ENCODE measurements at regions of chr2 and their contacts with region 1.

Region 1: GRCh38 chr2:46776687-46777327 is 138.8 kb downstream of the MCFD2 start:
- DNase-seq: no peak
- H3K4me3 ChIP-seq: no peak overlapping the region
- H3K27ac ChIP-seq: no peak overlapping the region
- H3K4me1 ChIP-seq: peaks cover 27 to 48% (median 39%) of the 10 kb centered on the region in 4 donors
- H3K27me3 ChIP-seq: no peaks in the 10 kb centered on the region
- CTCF ChIP-seq: peak; percentile 60 to 76 (median 64)
- EP300 ChIP-seq: no peak
- POLR2A ChIP-seq: no peak

Region 2: GRCh38 chr2:46230115-46230571 is 546.7 kb before region 1 on chr2:
- intact Hi-C with region 1: no loop called
- DNase-seq: no peak
- H3K4me3 ChIP-seq: no peak overlapping the region
- H3K27ac ChIP-seq: no peak overlapping the region
- H3K4me1 ChIP-seq: peaks cover 0 to 14% (median 9%) of the 10 kb centered on the region in 4 donors
- H3K27me3 ChIP-seq: no peaks in the 10 kb centered on the region
- CTCF ChIP-seq: peak in 1 of 3 experiments; percentile 3
- EP300 ChIP-seq: no peak
- POLR2A ChIP-seq: no peak

Region 3: DNA sequence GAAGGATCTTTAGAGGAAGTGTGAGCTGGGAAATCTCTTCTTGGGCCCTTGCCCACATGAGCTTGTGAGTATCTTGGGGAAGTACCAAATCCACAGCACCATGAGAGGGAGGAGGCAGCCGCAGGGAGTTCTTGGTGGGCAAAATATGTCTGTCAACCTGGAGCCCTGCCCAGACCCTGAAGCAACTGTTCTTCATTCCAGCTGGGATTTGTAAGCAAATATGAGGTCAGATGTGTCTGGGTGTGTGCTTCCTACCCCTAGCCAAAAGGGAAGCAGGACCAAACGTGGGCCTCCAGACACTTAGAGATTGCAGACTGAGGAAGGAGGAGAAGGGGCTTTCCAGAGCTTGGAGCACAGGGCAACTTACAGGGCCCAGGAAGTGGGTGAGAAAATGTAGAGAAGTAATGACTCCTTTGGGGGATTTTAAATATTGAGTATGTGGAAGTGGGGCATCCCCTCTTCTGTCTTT is 255.6 kb before region 1 on chr2:
- intact Hi-C with region 1: no loop called
- DNase-seq: peak; percentile 93
- H3K4me3 ChIP-seq: no peak overlapping the region
- H3K27ac ChIP-seq: peak overlapping the region; percentile 45 to 55 (median 50)
- H3K4me1 ChIP-seq: peaks cover 8 to 23% (median 14%) of the 10 kb centered on the region in 4 donors
- H3K27me3 ChIP-seq: no peaks in the 10 kb centered on the region
- CTCF ChIP-seq: no peak
- EP300 ChIP-seq: no peak
- POLR2A ChIP-seq: no peak

Region 4: GRCh38 chr2:46650556-46651001 is 126.2 kb before region 1 on chr2:
- intact Hi-C with region 1: loop called (anchors 5 kb)
- DNase-seq: no peak
- H3K4me3 ChIP-seq: no peak overlapping the region
- H3K27ac ChIP-seq: no peak overlapping the region
- H3K4me1 ChIP-seq: peaks cover 5 to 25% (median 12%) of the 10 kb centered on the region in 4 donors
- H3K27me3 ChIP-seq: no peaks in the 10 kb centered on the region
- CTCF ChIP-seq: peak; percentile 90 to 99 (median 94)
- EP300 ChIP-seq: no peak
- POLR2A ChIP-seq: no peak

Region 5: DNA sequence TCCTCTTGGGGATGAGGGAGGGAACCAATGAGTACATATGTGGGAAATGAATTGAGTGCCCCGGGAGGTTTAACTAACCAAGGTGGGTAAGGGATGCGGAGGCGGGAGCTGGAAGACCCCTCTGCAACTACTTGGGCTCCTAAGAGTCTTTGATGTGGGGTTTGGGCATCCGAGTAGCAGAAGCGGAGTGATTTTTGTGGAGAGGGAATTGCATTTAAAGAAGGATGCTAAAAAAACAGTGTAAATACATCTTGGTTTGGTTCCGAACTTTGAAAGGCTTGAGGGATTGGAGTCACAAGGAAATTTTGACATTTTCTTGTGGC is 76.9 kb before region 1 on chr2:
- intact Hi-C with region 1: loop called (anchors 5 kb)
- DNase-seq: no peak
- H3K4me3 ChIP-seq: peak overlapping the region; percentile 80 to 98 (median 90)
- H3K27ac ChIP-seq: peak overlapping the region; percentile 96 to 99 (median 97)
- H3K4me1 ChIP-seq: peaks cover 31 to 56% (median 48%) of the 10 kb centered on the region in 4 donors
- H3K27me3 ChIP-seq: no peaks in the 10 kb centered on the region
- CTCF ChIP-seq: no peak
- EP300 ChIP-seq: no peak
- POLR2A ChIP-seq: no peak

Region 6: GRCh38 chr2:46812361-46813024 is 35.7 kb after region 1 on chr2:
- intact Hi-C with region 1: loop called (anchors 5 kb)
- DNase-seq: peak; percentile 93
- H3K4me3 ChIP-seq: peak overlapping the region in 3 of 4 donors; percentile 14 to 27 (median 21)
- H3K27ac ChIP-seq: peak overlapping the region; percentile 80 to 89 (median 82)
- H3K4me1 ChIP-seq: peaks cover 58 to 66% (median 66%) of the 10 kb centered on the region in 4 donors
- H3K27me3 ChIP-seq: no peaks in the 10 kb centered on the region
- CTCF ChIP-seq: no peak
- EP300 ChIP-seq: peak; percentile 1
- POLR2A ChIP-seq: no peak

Region 7: DNA sequence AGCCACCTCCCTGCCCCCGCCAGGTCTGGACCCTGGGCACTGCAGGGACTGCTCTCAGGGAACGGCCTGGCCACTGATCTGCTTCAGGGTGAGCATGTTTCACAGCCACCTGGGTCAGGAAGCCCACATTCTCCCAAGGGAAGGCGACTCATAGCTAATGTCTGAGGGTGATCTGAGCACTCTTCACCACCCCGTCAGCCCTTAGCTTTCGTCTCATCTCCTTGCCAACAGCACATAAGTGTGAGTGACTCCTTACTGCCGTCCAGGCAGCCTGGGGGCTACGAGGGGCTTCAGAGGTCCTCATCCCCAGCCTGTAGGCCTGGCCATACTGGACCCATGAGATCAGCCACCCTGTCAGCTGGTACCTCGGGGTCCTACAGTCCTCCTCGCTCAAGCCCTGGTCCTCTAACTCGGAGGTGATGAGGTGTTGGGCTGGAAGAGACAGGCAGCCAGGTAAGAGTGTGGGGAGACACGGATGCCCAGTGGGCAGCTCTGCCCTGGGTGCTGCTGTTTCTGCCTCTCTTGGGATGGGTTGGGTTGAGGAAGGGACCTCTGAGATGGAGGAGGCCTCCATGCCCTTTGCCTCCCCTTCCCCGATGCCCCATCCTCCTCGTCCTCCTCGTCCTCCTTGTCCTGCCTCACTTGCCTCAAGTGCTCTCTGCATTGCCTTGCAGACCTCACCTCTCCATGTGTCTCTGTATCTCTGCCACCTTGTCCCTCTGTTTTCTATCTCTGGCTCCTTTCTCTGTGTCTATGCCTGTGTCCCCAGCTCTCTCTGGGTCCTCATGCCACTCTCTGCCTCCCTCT is 51.0 kb after region 1 on chr2:
- intact Hi-C with region 1: no loop called
- DNase-seq: no peak
- H3K4me3 ChIP-seq: no peak overlapping the region
- H3K27ac ChIP-seq: no peak overlapping the region
- H3K4me1 ChIP-seq: peaks cover 0 to 14% (median 2%) of the 10 kb centered on the region in 4 donors
- H3K27me3 ChIP-seq: no peaks in the 10 kb centered on the region
- CTCF ChIP-seq: no peak
- EP300 ChIP-seq: no peak
- POLR2A ChIP-seq: no peak

Region 8: GRCh38 chr2:47735136-47735869 is 958.5 kb after region 1 on chr2:
- intact Hi-C with region 1: no loop called
- DNase-seq: no peak
- H3K4me3 ChIP-seq: no peak overlapping the region
- H3K27ac ChIP-seq: no peak overlapping the region
- H3K4me1 ChIP-seq: no peaks in the 10 kb centered on the region
- H3K27me3 ChIP-seq: no peaks in the 10 kb centered on the region
- CTCF ChIP-seq: no peak
- EP300 ChIP-seq: no peak
- POLR2A ChIP-seq: no peak

Measured in esophagus muscularis mucosa (tissue), 4 donors.